A673 (cell line): ENCODE measurements at regions of chr9 and their contacts with region 1.

Region 1: GRCh38 chr9:93684806-93685543 is 108.6 kb downstream of the PHF2 start:
- DNase-seq: peak; percentile 29
- H3K4me3 ChIP-seq: no peak overlapping the region
- H3K27ac ChIP-seq: no peak overlapping the region
- H3K4me1 ChIP-seq: no peaks in the 10 kb centered on the region
- H3K27me3 ChIP-seq: no peaks in the 10 kb centered on the region
- CTCF ChIP-seq: peak; percentile 48

Region 2: DNA sequence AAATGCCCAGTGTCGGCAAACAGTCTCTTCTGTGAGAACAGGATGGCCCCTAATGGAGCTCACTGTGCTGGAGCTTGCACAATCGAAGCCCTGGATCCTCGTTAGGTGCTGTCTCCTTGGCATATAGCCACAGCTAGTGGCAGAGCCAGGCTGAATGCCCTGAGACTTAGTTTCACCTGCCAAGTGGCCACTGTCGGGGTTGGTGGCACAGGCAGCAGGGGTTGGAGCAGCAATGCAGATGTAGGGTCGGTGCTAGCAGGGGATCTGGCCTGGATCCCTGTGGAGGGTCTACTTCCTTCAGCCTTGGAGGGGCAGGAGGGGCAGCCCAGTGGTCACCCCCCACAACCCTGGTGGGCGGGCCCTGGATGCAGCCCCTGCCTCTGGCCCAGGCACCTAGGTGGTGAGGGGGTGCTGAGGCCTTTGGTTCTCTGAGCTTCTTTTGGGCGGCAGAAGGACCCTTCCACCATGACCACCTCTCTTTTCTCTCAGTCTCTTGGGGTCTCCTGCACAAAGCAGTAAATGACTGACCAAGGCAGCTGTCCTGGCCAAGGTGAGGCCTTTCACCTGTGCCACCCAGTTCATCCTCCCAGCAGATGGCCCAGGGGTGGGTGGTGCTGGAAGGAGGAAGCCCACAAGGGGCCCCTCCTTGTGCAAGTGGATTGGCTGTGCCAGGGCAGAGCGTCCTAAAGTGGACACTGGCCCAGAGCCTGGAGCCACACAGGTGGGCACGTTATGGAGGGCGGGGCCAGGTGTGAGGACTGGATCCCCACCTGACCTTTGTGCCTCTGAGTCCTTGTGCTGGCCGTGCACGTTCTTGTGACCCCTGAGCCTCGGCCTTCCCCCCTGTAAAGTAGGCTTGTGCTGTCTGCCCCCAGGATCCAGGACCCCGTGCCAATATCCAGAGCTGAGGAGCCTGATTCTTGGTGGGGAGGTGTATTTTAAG is 63.8 kb before region 1 on chr9:
- CTCF ChIA-PET with region 1: no interaction called
- POLR2A ChIA-PET with region 1: no interaction called
- intact Hi-C with region 1: no loop called
- DNase-seq: no peak
- H3K4me3 ChIP-seq: no peak overlapping the region
- H3K27ac ChIP-seq: no peak overlapping the region
- H3K4me1 ChIP-seq: no peaks in the 10 kb centered on the region
- H3K27me3 ChIP-seq: no peaks in the 10 kb centered on the region
- CTCF ChIP-seq: no peak

Region 3: DNA sequence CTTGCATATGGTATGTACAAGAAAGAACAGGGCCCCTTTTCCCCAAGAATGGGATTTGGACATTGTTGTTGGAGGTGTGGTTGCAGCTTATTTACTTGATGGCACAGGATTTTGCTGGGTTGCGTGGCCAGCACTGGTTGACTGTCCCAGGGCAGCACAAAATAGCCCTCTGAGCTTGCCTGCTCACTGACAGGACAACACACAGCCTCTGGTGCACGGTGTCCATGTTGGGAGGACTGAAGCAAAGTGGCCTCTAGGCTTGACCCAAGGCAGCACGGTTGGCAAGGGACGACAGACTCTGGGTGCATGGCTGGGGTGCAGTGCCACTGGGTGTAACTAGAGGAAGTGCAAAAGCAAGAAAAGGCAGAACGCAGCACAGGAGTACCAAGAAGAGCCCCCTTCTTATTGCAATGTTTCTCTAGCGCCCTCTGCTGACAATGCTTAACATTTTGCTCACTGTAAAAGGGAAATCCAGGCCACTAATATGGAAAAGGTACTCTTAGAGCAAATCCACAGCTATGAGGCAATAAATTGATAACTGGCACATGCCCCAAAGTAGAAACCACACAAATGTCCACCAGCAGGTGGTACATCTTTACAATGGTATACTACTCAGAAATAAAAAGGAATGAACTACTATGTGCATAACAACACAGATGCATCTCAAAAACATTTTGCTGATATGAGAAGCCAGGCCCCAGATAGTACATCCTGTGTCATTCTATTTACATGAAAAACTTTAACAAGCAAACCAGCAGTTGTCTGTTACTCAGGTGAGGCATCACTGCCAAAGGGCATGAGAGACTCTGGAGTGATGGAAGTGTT is 317.6 kb after region 1 on chr9:
- CTCF ChIA-PET with region 1: interaction called, 3 read pairs
- POLR2A ChIA-PET with region 1: no interaction called
- intact Hi-C with region 1: loop called (anchors 2 kb)
- DNase-seq: peak; percentile 72
- H3K4me3 ChIP-seq: no peak overlapping the region
- H3K27ac ChIP-seq: no peak overlapping the region
- H3K4me1 ChIP-seq: no peaks in the 10 kb centered on the region
- H3K27me3 ChIP-seq: no peaks in the 10 kb centered on the region
- CTCF ChIP-seq: peak; percentile 86